ENCODE measurements at regions of chr17 and their contacts with region 1.

Region 1: GRCh38 chr17:59619293-59620063 is at the start of gene CLTC:
- DNase-seq: peak; percentile 97
- H3K4me3 ChIP-seq: peak within 1 kb of the TSS; percentile 83 to 97 (median 96)
- H3K27ac ChIP-seq: peak within 1 kb of the TSS; percentile 97
- H3K4me1 ChIP-seq: peaks cover 13% of the 10 kb centered on the region
- H3K27me3 ChIP-seq: no peaks in the 10 kb centered on the region
- CTCF ChIP-seq: no peak
- total RNA-seq, gene CLTC: 266 to 356 TPM

Region 2: GRCh38 chr17:59521204-59522126 is 98.0 kb before region 1 on chr17:
- CTCF ChIA-PET with region 1: no interaction called
- dilution Hi-C with region 1: no loop called
- in situ Hi-C with region 1: no loop called
- intact Hi-C with region 1: loop called (anchors 5 kb)
- DNase-seq: peak; percentile 56
- H3K4me3 ChIP-seq: no peak overlapping the region
- H3K27ac ChIP-seq: no peak overlapping the region
- H3K4me1 ChIP-seq: no peaks in the 10 kb centered on the region
- H3K27me3 ChIP-seq: no peaks in the 10 kb centered on the region
- CTCF ChIP-seq: peak; percentile 88 to 91

Region 3: DNA sequence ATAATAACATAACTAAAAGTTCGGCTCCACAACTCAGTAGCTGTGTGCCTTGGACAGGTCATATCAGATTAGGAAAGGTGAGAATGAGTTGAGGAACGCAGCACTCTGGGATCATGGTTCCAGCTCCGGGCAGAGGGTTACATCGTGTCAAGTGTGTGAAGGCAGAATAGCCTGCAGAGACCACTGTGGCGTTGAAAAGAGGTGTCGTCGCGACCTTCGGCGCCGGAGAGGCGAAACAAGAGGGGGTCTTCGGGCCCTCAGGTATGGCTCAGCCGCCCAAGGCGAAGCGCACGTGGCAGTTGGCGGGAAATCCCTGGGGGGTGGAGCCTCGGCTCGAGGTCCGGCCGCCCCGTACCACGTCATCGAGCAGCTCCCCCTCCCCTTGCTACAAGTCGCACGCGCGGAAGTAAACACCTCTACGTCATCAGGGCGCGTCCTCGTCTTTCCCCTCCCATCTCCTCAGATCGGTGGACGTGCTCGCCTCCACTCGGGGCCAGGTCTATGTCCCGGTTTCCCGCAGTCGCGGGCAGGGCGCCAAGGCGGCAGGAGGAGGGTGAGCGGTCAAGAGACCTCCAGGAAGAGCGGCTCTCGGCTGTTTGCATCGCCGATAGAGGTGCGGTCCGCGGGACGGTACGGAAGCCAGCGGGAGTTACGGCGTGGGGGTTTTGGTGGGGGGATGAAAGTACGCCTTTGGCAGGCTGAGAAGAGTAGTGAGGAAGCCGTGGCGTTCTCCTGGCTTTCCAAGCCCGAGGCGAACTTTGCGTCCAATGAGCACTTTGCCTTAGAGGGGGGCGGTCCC is 54.1 kb before region 1 on chr17 and contains the start of gene DHX40:
- CTCF ChIA-PET with region 1: no interaction called
- dilution Hi-C with region 1: no loop called
- in situ Hi-C with region 1: no loop called
- intact Hi-C with region 1: loop called (anchors 2 kb)
- DNase-seq: peak; percentile 83
- H3K4me3 ChIP-seq: peak within 1 kb of the TSS; percentile 93 to 98 (median 95)
- H3K27ac ChIP-seq: peak within 1 kb of the TSS; percentile 87
- H3K4me1 ChIP-seq: peaks cover 9% of the 10 kb centered on the region
- H3K27me3 ChIP-seq: no peaks in the 10 kb centered on the region
- CTCF ChIP-seq: no peak
- total RNA-seq, gene DHX40: 22.5 to 42.7 TPM

Region 4: GRCh38 chr17:59680314-59680713 is 60.8 kb after region 1 on chr17:
- CTCF ChIA-PET with region 1: no interaction called
- dilution Hi-C with region 1: no loop called
- in situ Hi-C with region 1: no loop called
- intact Hi-C with region 1: no loop called
- DNase-seq: no peak
- H3K4me3 ChIP-seq: no peak overlapping the region
- H3K27ac ChIP-seq: no peak overlapping the region
- H3K4me1 ChIP-seq: no peaks in the 10 kb centered on the region
- H3K27me3 ChIP-seq: no peaks in the 10 kb centered on the region
- CTCF ChIP-seq: no peak

Region 5: DNA sequence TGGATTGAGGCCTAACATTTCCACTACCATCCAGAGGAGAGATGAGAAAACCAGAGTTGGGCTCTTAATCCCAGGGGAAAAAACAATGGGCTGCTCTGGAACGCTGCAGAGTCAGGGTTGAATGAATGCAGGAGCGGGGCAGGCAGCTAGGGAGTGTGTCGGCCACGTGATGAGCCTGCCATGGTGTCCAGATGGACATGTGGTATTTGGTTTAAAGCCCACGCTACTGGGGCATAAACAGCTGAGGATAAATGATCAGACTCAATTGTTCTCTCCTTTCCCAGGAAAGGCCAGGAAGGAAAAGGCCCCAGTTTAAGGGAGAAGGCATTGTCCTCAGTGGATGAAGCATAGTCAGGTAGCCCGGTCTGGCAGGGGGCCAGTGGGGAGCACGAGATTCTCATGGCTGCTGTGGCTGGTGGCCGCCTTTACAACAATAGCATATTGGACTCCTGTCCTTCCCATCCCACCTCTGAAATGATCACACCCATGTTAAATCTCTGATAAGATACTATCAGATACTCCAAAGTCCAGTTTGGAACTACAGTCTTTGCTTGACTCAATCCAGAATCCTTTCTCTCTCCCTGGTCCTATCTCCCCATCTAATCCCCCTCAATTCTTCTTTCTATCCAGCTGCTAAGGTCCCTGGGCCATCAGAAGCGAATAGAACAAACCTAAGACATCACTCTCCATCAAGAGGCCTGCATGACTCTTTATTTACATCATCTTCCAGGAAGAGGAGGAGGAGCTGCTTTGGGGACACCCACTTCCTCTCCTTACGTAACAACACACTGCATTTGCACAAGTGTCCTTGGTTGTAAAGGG is 550.7 kb after region 1 on chr17:
- CTCF ChIA-PET with region 1: no interaction called
- dilution Hi-C with region 1: no loop called
- in situ Hi-C with region 1: no loop called
- intact Hi-C with region 1: no loop called
- DNase-seq: peak; percentile 9
- H3K4me3 ChIP-seq: no peak overlapping the region
- H3K27ac ChIP-seq: no peak overlapping the region
- H3K4me1 ChIP-seq: no peaks in the 10 kb centered on the region
- H3K27me3 ChIP-seq: no peaks in the 10 kb centered on the region
- CTCF ChIP-seq: no peak

Measured in mammary epithelial cell (primary cell).